Activated CD8-positive, alpha-beta T cell treated with anti-CD3 and anti-CD28 coated beads for 36 hours (primary cell): ENCODE measurements at regions of chr4 and their contacts with region 1.

Region 1: DNA sequence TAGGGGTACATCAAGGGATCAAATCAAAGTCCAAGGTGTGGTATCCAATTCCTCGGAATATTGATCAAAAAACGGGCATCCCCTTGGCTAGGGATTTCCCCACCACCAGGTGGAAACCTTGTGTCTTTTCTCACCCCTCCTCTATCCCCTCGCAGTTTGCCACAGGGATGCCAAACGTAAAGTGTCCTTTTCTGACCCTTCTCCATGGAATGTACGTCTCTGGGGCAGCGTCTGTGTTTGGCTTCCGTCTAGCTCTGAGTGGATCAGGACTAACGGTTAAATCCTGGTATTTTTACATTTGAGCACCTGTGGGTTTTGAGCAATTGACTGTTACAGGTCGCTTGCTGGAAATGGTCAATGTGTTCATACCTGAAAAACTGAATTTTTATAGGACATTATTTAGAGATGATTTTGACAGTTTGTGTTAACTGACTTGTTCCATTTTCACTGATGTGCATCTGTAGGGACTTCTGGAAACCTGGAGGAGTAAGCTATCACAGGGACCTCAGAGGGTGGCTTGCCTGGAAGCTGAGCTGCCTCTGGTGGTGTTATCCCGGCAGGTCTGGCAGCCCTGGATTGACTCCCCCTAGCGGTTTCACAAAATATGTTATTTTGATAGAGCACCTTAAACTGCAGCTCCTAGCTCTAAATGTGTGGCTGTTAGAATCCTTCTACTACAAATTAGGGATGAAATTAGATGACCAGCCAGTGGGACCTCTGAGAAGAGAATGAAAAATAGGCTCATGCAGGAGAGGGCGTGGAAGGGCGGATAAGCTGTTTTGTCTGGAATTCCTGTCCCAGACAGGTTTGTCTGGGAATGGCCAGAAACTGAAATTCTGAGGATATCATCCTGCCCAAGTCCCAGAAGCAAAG is 8.8 kb upstream of the MGST2 start:
- DNase-seq: peak; percentile 53
- ATAC-seq: peak; percentile 53
- H3K4me3 Mint-ChIP-seq: peak overlapping the region; percentile 63
- H3K27ac Mint-ChIP-seq: peak overlapping the region; percentile 92
- H3K4me1 Mint-ChIP-seq: peaks cover 18% of the 10 kb centered on the region
- H3K27me3 Mint-ChIP-seq: no peaks in the 10 kb centered on the region
- CTCF ChIP-seq: peak; percentile 82

Region 2: DNA sequence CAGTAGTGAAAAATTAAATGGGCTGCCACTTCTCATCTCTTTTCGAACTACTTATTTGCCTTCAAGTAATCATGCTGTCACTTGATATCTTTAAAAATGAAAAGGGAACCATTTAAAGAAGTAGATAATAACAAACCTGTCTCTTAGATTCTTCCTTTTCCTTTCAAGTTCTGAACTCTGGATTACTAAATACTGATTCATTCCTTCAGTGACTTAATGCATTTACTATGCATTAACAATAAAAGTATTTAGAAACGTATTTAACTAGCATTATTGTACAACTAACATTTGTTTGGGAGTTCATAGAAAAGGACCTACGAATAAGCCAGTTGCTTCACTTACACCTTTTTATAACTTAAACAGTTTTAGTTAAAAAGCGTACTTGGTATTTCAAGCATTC is 264.1 kb before region 1 on chr4:
- CTCF ChIA-PET with region 1: no interaction called
- POLR2A ChIA-PET with region 1: no interaction called
- intact Hi-C with region 1: no loop called
- DNase-seq: no peak
- ATAC-seq: no peak
- H3K4me3 Mint-ChIP-seq: no peak overlapping the region
- H3K27ac Mint-ChIP-seq: no peak overlapping the region
- H3K4me1 Mint-ChIP-seq: peaks cover 2% of the 10 kb centered on the region
- H3K27me3 Mint-ChIP-seq: no peaks in the 10 kb centered on the region
- CTCF ChIP-seq: no peak

Region 3: GRCh38 chr4:139603576-139604387 is 53.1 kb before region 1 on chr4:
- CTCF ChIA-PET with region 1: interaction called, 112 read pairs
- POLR2A ChIA-PET with region 1: interaction called, 3 read pairs
- intact Hi-C with region 1: no loop called
- DNase-seq: peak; percentile 44
- ATAC-seq: peak; percentile 29
- H3K4me3 Mint-ChIP-seq: no peak overlapping the region
- H3K27ac Mint-ChIP-seq: no peak overlapping the region
- H3K4me1 Mint-ChIP-seq: peaks cover 10% of the 10 kb centered on the region
- H3K27me3 Mint-ChIP-seq: no peaks in the 10 kb centered on the region
- CTCF ChIP-seq: peak; percentile 75

Region 4: GRCh38 chr4:139692309-139693012 is 35.6 kb after region 1 on chr4:
- CTCF ChIA-PET with region 1: interaction called, 14 read pairs
- POLR2A ChIA-PET with region 1: no interaction called
- intact Hi-C with region 1: no loop called
- DNase-seq: no peak
- ATAC-seq: no peak
- H3K4me3 Mint-ChIP-seq: no peak overlapping the region
- H3K27ac Mint-ChIP-seq: no peak overlapping the region
- H3K4me1 Mint-ChIP-seq: no peaks in the 10 kb centered on the region
- H3K27me3 Mint-ChIP-seq: no peaks in the 10 kb centered on the region
- CTCF ChIP-seq: no peak

Region 5: DNA sequence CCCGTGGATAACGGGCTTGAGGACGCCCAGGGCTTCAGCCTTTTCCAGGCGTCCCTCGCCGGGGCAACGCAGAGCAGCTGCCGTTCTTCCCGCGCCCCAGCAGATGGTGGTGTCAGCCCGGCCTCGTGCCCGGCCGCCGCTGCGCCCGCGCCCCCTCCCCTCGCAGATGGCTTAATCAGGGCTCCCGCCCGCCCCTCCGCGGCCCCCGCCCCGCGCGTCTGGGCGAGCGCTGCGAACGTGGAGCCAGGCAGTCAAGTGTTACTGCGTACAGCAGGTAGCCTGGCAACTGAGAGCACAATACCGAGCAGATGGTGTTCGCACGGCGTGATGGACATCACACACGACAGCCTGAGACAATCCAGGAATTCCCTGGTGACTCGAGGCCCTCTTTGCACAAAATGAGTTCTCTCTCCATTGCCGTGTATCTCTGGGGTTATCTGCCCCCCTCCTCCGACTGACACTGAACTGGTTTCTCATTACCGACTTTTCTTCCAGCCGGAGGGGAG is 78.1 kb after region 1 on chr4:
- CTCF ChIA-PET with region 1: interaction called, 11 read pairs
- POLR2A ChIA-PET with region 1: no interaction called
- intact Hi-C with region 1: no loop called
- DNase-seq: peak; percentile 76
- ATAC-seq: peak; percentile 82
- H3K4me3 Mint-ChIP-seq: peak overlapping the region; percentile 60
- H3K27ac Mint-ChIP-seq: no peak overlapping the region
- H3K4me1 Mint-ChIP-seq: peaks cover 16% of the 10 kb centered on the region
- H3K27me3 Mint-ChIP-seq: peaks cover 38% of the 10 kb centered on the region
- CTCF ChIP-seq: peak; percentile 78